ENCODE measurements at regions of chr15 and their contacts with region 1.

Region 1: GRCh38 chr15:91885714-91886270 is 32.3 kb downstream of the SLCO3A1 start:
- DNase-seq: no peak
- CTCF ChIP-seq: no peak

Region 2: DNA sequence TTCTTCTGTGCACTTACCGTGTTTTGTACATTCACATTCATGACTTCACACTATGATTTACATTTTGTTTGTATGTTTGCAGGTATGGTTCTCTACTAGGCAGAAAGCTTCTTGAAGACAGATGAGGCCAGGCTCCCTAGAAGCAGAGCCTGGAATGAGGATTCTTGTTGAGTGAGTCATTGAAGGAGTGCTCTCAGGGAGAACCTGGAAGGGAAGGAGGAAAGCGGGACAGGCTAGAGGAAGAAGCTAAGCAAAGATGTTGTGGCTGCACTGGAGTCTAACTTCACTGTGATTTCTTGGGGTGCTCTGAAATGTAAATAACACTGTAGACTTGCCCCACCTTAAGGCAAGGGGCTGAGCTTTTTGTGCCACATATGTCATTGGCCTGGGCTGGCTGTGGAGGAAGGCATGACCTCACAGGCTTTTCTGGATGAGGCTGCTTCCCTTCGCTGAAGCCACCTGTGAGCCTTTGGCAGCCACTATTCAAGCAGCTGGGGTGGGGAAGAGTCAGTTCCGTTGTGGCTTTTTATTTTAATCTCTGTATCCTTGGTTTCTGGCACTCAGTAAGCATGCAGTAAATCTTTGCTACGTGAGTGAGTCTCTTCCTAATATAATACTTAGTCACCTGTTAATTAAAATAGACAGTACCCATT is 478.4 kb before region 1 on chr15:
- CTCF ChIA-PET with region 1: no interaction called
- POLR2A ChIA-PET with region 1: no interaction called
- DNase-seq: no peak
- CTCF ChIP-seq: no peak

Region 3: GRCh38 chr15:91897585-91898372 is 12.0 kb after region 1 on chr15:
- CTCF ChIA-PET with region 1: interaction called, 10 read pairs
- POLR2A ChIA-PET with region 1: no interaction called
- DNase-seq: no peak
- CTCF ChIP-seq: no peak